ENCODE measurements at regions of chr11 and their contacts with region 1.

Region 1: DNA sequence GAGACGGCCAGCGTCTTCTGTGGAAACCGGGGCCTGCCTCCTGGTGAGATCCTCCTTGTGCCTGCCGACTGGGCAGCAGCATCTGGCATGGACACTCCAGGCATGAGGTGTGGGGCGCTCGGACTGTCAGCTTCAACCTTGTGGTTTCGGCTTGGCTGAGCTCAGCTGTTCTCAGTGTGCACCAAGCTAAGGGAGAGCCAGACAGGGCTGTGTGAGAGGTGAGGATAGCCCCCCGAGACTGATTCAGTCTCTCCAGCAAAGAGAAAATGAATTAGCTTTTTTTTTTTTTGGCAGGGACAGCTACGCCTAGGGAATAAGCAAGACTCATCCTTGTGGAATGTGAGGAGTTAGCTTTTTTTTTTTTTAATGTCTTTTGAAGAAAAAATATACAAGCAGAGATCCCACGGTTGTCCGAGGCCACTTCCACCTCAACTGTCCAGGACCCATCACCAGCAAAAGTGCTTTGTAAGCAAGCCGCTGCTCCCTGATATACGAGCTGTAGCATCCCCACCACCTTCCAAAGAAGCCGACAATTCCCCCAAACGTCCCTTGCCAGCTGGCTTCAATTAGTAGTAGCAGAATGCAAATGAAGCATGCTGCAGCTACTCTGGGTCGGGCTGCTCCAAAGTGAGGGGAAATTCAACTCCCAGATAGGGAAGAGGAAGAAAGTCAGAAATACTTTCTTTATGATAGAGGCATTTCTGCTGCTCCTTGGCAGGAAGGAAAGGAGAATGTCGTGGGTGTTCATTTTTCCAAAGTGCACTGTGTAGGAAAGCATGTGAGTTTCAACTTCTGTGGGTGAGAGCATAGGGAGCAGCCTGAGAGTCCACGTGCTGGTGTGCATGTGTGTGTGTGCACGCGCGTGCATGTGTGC is 9.7 kb upstream of the THY1 start:
- DNase-seq: no peak
- H3K4me3 ChIP-seq: no peak overlapping the region
- H3K4me3 Mint-ChIP-seq: no peak overlapping the region
- H3K27ac Mint-ChIP-seq: no peak overlapping the region
- H3K4me1 ChIP-seq: no peaks in the 10 kb centered on the region
- H3K4me1 Mint-ChIP-seq: no peaks in the 10 kb centered on the region
- H3K27me3 ChIP-seq: no peaks in the 10 kb centered on the region
- H3K27me3 Mint-ChIP-seq: peaks cover 15% of the 10 kb centered on the region
- CTCF ChIP-seq: no peak

Region 2: GRCh38 chr11:119181677-119182412 is 250.9 kb before region 1 on chr11:
- CTCF ChIA-PET with region 1: no interaction called
- POLR2A ChIA-PET with region 1: no interaction called
- intact Hi-C with region 1: no loop called
- DNase-seq: no peak
- H3K4me3 ChIP-seq: no peak overlapping the region
- H3K4me3 Mint-ChIP-seq: no peak overlapping the region
- H3K27ac Mint-ChIP-seq: no peak overlapping the region
- H3K4me1 ChIP-seq: peaks cover 17% of the 10 kb centered on the region
- H3K4me1 Mint-ChIP-seq: peaks cover 15% of the 10 kb centered on the region
- H3K27me3 ChIP-seq: no peaks in the 10 kb centered on the region
- H3K27me3 Mint-ChIP-seq: no peaks in the 10 kb centered on the region
- CTCF ChIP-seq: no peak

Region 3: DNA sequence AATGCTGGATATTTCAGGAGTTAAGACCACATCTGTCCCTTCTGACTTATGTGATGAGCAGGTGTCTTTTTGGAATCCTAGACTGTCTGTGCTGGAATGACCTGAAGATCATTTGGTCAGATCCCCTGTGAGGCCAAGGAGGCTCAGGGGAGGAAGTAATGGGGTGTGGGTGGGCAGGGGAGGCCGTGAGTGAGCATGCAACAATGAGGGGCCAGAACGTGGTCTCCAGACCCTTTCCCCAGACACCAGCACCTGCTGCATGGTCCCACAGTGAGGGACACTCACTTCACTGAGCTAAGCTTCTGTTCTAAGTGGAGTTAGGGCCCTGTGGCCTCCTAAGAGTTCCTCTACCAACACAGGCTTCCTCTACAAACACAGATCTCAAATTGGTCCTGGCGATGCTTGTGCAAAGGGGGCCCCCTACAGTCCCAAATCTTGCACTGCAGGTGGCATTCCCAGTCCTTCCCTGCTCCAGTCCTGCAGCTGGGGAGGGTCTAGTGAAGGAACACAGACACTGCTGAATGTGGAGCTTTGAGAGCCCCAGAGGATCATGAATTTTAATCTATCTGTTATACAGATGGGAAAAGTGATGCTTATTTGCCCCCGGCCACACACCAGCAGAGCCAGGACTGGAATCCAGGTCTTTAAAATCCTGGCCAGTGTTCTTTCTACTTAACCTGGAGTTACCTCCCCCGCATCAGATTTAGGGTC is 58.6 kb before region 1 on chr11:
- CTCF ChIA-PET with region 1: no interaction called
- POLR2A ChIA-PET with region 1: no interaction called
- intact Hi-C with region 1: no loop called
- DNase-seq: peak; percentile 89 to 95
- H3K4me3 ChIP-seq: no peak overlapping the region
- H3K4me3 Mint-ChIP-seq: no peak overlapping the region
- H3K27ac Mint-ChIP-seq: no peak overlapping the region
- H3K4me1 ChIP-seq: peaks cover 32% of the 10 kb centered on the region
- H3K4me1 Mint-ChIP-seq: peaks cover 28% of the 10 kb centered on the region
- H3K27me3 ChIP-seq: no peaks in the 10 kb centered on the region
- H3K27me3 Mint-ChIP-seq: no peaks in the 10 kb centered on the region
- CTCF ChIP-seq: peak; percentile 98 to 99

Region 4: DNA sequence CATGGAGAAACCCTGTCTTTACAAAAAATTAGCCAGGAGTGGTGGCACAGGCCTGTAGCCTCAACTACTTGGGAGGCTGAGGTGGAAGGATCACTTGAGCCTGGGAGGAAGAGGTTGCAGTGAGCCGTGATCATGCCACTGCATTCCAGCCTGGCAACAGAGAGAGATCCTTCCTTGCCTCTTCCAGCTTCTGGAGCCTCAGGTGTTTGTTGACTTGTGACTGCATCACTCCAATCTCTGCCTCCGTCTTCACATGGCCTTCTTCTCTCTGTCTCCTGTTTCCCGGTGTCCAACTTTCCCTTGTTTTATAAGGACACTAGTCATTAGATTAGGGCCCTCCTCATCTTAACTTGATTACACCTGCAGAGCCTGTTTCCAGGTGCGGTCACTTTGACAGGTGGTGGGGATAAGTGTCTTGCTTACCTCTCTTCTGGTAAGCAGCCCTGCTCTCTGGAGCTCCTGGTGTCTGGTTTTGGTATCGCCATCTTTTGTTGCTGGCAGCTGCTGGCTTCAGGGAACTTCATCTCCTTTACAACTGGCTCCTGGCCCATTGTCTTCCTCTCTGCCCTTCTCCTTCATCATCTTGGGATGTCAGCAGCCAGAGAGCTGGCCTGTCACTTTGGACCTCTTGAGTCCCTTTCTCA is 43.0 kb before region 1 on chr11:
- CTCF ChIA-PET with region 1: no interaction called
- POLR2A ChIA-PET with region 1: no interaction called
- intact Hi-C with region 1: loop called (anchors 5 kb)
- DNase-seq: peak; percentile 77 to 82
- H3K4me3 ChIP-seq: no peak overlapping the region
- H3K4me3 Mint-ChIP-seq: no peak overlapping the region
- H3K27ac Mint-ChIP-seq: no peak overlapping the region
- H3K4me1 ChIP-seq: no peaks in the 10 kb centered on the region
- H3K4me1 Mint-ChIP-seq: peaks cover 6% of the 10 kb centered on the region
- H3K27me3 ChIP-seq: 0 out of 2 replicates have a peak, but pooled peaks cover 1% of the 10 kb centered on the region
- H3K27me3 Mint-ChIP-seq: no peaks in the 10 kb centered on the region
- CTCF ChIP-seq: peak; percentile 90